A549 (cell line): ENCODE measurements at regions of chr11 and their contacts with region 1.

Region 1: DNA sequence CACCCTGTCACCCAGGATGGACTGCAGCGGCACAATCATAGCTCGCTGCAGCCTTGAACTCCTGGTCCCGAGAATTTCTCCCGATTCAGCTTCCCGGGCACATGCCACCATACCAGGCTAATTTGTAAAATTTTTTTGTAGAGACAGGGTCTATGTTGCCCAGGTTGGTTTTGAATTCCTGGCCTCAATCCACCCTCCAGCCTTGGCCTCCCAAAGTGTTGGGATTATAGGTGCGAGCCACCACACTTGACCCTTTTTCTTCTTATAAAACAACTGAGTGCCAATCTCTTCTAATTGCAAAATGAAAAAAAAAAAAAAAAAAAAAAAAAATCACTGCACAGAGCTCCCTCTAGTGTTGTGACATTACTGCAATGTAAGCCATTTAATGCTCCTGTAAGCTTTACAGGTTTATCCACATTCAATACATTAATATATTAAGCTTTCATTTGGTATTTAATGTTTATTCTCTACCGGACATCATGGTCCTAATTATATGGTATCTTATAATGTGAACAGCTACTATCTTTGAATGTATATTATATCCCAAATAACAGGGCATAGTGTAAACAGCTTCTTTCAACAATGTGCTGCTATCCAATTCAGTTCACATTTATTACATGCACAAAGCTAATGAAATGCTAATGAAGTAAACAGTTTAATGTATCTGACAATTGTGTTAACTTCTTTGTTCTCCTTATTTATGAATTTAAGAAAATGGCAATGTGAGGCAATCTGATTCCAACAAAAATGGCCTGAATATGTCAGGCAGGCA is 44.6 kb downstream of the COPB1 start:
- DNase-seq: peak in 1 of 2 experiments; percentile 37
- ATAC-seq: peak; percentile 63 to 74; a peak in 5 of 6 replicates
- H3K4me3 ChIP-seq: no peak overlapping the region
- H3K27ac ChIP-seq: peak overlapping the region in 1 of 2 experiments; percentile 63; a peak in 3 of 6 replicates
- H3K4me1 ChIP-seq: 0 out of 3 replicates have a peak, but pooled peaks cover 3% of the 10 kb centered on the region
- CTCF ChIP-seq: peak; percentile 88
- EP300 ChIP-seq: no peak
- POLR2A ChIP-seq: no peak
- RAD21 ChIP-seq: peak; percentile 66 to 68

Region 2: DNA sequence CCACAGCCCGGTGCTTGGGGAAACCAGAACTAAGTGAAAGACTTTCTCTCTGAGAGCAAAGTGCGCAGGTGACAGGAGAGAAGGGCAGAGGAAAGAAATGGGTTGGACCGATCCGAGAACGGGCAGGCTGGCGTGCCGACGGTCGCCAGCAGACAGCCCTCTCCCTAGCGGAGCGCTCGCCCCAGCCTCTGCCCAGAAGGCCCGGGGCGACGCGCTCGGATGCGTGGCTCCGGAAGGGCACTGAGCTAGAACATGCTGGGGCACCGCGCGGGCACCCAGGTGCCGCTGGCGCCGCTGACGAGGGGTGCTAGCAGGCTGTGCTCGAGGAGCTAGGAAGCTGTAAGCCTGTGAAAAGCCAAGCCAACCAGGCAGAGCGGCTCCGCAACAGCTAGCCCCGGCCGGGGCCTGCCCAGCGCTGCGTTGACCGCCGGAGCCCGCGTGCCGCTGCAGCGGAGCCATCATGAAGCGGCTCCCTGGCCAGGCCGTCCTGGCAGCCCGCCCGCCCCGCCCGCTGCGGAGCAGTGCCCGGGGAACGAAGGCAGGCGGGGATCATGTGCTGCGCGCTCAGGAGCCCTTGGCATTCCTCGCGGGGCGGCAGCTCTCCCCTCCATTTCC is 74.0 kb before region 1 on chr11:
- CTCF ChIA-PET with region 1: interaction called, 13 read pairs
- POLR2A ChIA-PET with region 1: interaction called, 6 read pairs
- DNase-seq: peak; percentile 58 to 72
- ATAC-seq: peak; percentile 95 to 96
- H3K4me3 ChIP-seq: peak overlapping the region; percentile 50
- H3K27ac ChIP-seq: peak overlapping the region; percentile 83 to 95
- H3K4me1 ChIP-seq: peaks cover 21% of the 10 kb centered on the region
- CTCF ChIP-seq: no peak
- EP300 ChIP-seq: no peak
- POLR2A ChIP-seq: peak; percentile 76
- RAD21 ChIP-seq: no peak; a peak in 1 of 5 replicates

Region 3: GRCh38 chr11:14413307-14414069 is 41.6 kb before region 1 on chr11:
- CTCF ChIA-PET with region 1: interaction called, 77 read pairs
- POLR2A ChIA-PET with region 1: interaction called, 9 read pairs
- DNase-seq: peak in 1 of 2 experiments; percentile 20
- ATAC-seq: peak in 1 of 2 experiments; percentile 63; a peak in 3 of 6 replicates
- H3K4me3 ChIP-seq: no peak overlapping the region
- H3K27ac ChIP-seq: peak overlapping the region in 1 of 2 experiments; percentile 1; a peak in 1 of 6 replicates
- H3K4me1 ChIP-seq: peaks cover 26% of the 10 kb centered on the region
- CTCF ChIP-seq: no peak
- EP300 ChIP-seq: no peak
- POLR2A ChIP-seq: no peak
- RAD21 ChIP-seq: 0 out of 5 replicates have a peak, but pooled peaks of 1 of the 2 experiments have one; percentile 4

Region 4: DNA sequence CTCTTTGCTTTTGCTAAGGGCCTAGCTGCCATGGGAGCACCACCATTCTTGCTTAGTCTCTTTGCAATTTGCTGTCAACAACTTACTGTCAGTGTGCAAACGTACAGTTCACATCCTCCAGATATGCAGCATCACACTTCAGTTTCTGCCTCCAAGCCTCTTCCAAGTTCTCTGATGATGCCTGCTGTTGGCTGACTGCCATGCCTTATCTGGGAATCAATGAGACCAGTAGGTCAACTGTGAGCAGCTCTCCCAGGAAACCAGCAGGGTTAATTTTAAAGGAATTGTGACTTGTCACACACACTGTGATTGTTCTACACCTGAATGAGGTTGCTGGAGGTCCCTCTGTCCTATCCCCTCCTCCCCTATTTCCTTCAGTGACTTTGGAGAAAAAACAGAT is 11.4 kb before region 1 on chr11:
- CTCF ChIA-PET with region 1: interaction called, 19 read pairs
- POLR2A ChIA-PET with region 1: interaction called, 4 read pairs
- DNase-seq: peak in 1 of 2 experiments; percentile 54
- ATAC-seq: peak; percentile 40 to 49; a peak in 3 of 6 replicates
- H3K4me3 ChIP-seq: no peak overlapping the region
- H3K27ac ChIP-seq: peak overlapping the region in 1 of 2 experiments; percentile 34; a peak in 2 of 6 replicates
- H3K4me1 ChIP-seq: peaks cover 47% of the 10 kb centered on the region
- CTCF ChIP-seq: no peak
- EP300 ChIP-seq: no peak
- POLR2A ChIP-seq: no peak
- RAD21 ChIP-seq: no peak

Region 5: GRCh38 chr11:14471127-14471526 is 16.1 kb after region 1 on chr11:
- CTCF ChIA-PET with region 1: interaction called, 45 read pairs
- POLR2A ChIA-PET with region 1: no interaction called
- DNase-seq: no peak
- ATAC-seq: no peak
- H3K4me3 ChIP-seq: no peak overlapping the region
- H3K27ac ChIP-seq: no peak overlapping the region
- H3K4me1 ChIP-seq: no peaks in the 10 kb centered on the region
- CTCF ChIP-seq: no peak
- EP300 ChIP-seq: no peak
- POLR2A ChIP-seq: no peak
- RAD21 ChIP-seq: no peak

Region 6: DNA sequence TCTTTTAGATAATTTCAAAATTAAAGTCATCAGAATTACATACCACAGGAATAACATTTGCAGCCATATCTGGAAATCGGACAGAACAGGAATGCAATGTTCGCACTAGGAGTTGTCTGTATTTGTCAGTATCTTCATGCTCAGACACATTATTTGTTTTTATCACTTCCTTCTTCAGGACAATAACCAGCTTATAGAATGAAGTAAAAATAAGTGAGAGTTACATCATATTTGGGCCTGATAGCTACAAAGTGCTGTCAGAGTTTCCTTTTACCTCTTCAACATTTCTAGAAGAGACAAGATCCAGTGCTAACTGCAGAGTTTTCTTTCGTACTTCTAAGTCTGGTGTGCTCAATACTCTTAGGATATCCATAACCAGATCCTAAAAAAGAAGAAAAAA is 25.7 kb after region 1 on chr11:
- CTCF ChIA-PET with region 1: interaction called, 25 read pairs
- POLR2A ChIA-PET with region 1: interaction called, 3 read pairs
- DNase-seq: peak in 1 of 2 experiments; percentile 4
- ATAC-seq: no peak
- H3K4me3 ChIP-seq: no peak overlapping the region; the same call in 2 of the 3 replicates
- H3K27ac ChIP-seq: peak overlapping the region; percentile 27 to 58; a peak in 5 of 6 replicates
- H3K4me1 ChIP-seq: peaks cover 17% of the 10 kb centered on the region; the same call in 2 of the 3 replicates
- CTCF ChIP-seq: no peak
- EP300 ChIP-seq: no peak
- POLR2A ChIP-seq: no peak
- RAD21 ChIP-seq: no peak